ENCODE measurements at regions of chr9 and their contacts with region 1.

Region 1: GRCh38 chr9:72271613-72272478 is 93.2 kb downstream of the ZFAND5 start:
- DNase-seq: peak in 6 of 9 donors; percentile 23 to 38 (median 27)
- ATAC-seq: peak; percentile 65
- H3K4me3 ChIP-seq: no peak overlapping the region
- H3K4me3 Mint-ChIP-seq: no peak overlapping the region
- H3K27ac ChIP-seq: no peak overlapping the region
- H3K27ac Mint-ChIP-seq: no peak overlapping the region
- H3K4me1 ChIP-seq: no peaks in the 10 kb centered on the region
- H3K4me1 Mint-ChIP-seq: peaks cover 0 to 5% (median 0%) of the 10 kb centered on the region in 7 donors
- H3K27me3 ChIP-seq: no peaks in the 10 kb centered on the region
- H3K27me3 Mint-ChIP-seq: peaks cover 0 to 20% (median 2%) of the 10 kb centered on the region in 5 donors

Region 2: DNA sequence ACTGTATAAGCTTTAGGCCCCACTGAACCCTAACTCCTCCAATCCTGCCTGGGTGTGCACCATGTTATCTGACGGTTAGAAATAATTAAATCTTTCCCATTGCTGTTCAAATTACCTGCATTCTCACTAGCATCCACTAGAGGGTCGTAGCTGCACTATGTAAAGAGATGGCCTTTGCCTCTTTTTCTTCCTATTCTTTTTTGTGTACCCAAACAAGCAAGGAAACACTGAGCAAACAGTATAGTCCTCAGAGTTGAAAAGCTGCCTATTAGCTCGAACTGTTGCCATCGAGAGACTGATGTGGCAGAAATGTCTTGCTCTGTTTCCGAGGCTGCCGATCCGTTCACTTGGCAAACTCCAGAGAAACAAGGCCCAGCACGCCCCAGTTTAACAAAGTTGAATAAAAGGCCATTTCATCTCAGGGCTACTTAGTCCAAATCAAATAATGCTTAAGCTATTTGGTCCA is 986.6 kb before region 1 on chr9:
- CTCF ChIA-PET with region 1: no interaction called
- POLR2A ChIA-PET with region 1: no interaction called
- intact Hi-C with region 1: loop called (anchors 1 to 2 kb)
- DNase-seq: peak in 6 of 9 donors; percentile 10 to 42 (median 36)
- ATAC-seq: peak; percentile 79
- H3K4me3 ChIP-seq: no peak overlapping the region
- H3K4me3 Mint-ChIP-seq: no peak overlapping the region
- H3K27ac ChIP-seq: no peak overlapping the region
- H3K27ac Mint-ChIP-seq: no peak overlapping the region
- H3K4me1 ChIP-seq: no peaks in the 10 kb centered on the region
- H3K4me1 Mint-ChIP-seq: peaks cover 0 to 3% (median 0%) of the 10 kb centered on the region in 7 donors
- H3K27me3 ChIP-seq: no peaks in the 10 kb centered on the region
- H3K27me3 Mint-ChIP-seq: peaks cover 2 to 9% (median 6%) of the 10 kb centered on the region in 5 donors

Region 3: DNA sequence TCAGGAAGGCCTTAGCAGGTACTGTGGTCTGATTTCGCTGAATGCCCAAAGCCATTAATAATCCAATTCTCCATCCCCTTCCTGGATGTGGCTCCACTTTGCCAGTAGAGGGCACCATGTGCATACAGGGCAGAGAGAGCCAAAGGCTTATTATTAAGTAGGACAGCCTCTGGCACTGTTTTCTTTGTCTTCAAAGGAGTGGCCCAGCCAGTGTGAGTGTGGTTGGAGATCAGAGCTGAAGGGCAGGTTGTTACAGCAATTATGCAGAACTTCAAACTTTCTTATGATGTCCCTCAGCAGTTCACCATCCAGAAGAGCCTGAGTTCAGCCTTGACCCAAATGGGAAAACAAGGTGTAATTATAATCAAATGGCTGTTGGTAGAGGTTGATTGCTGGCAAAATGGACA is 464.9 kb before region 1 on chr9:
- CTCF ChIA-PET with region 1: interaction called, 3 read pairs
- POLR2A ChIA-PET with region 1: no interaction called
- intact Hi-C with region 1: loop called (anchors 2 kb)
- DNase-seq: peak in 8 of 9 donors; percentile 20 to 65 (median 50)
- ATAC-seq: peak; percentile 98
- H3K4me3 ChIP-seq: no peak overlapping the region
- H3K4me3 Mint-ChIP-seq: no peak overlapping the region
- H3K27ac ChIP-seq: no peak overlapping the region
- H3K27ac Mint-ChIP-seq: peak overlapping the region in 7 of 9 donors; percentile 19 to 85 (median 65)
- H3K4me1 ChIP-seq: peaks cover 0 to 7% of the 10 kb centered on the region in 2 donors
- H3K4me1 Mint-ChIP-seq: peaks cover 0 to 21% (median 10%) of the 10 kb centered on the region in 7 donors
- H3K27me3 ChIP-seq: no peaks in the 10 kb centered on the region
- H3K27me3 Mint-ChIP-seq: peaks cover 0 to 3% (median 0%) of the 10 kb centered on the region in 5 donors

Region 4: DNA sequence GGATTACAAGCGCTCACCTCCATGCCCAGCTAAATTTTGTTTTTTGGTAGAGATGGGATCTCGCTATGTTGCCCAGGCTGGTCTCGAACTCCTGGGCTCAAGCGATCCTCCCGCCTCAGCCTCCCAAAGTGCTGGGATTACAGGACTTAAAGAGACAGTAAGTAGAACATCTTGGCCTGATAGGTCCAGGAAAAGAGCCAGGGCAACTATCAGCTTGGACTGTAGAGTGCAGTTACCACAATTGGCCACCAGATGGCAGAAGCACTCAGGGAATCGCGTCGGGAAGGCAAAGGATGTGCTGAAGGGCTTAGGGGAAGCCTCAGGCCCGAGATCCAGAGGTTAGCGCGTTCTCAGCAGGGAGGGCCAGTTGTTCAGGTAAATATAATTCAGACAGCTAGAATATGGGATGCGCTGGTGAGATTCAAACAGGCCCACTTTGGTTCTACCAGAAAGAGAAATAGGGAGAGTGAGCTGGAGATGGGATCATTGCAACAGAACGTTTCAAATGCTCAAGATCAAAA is 232.9 kb before region 1 on chr9:
- CTCF ChIA-PET with region 1: interaction called, 5 read pairs
- POLR2A ChIA-PET with region 1: no interaction called
- intact Hi-C with region 1: loop called (anchors 1 kb)
- DNase-seq: peak; percentile 15 to 59 (median 41)
- ATAC-seq: peak; percentile 76
- H3K4me3 ChIP-seq: no peak overlapping the region
- H3K4me3 Mint-ChIP-seq: peak overlapping the region in 1 of 10 donors; percentile 66
- H3K27ac ChIP-seq: no peak overlapping the region
- H3K27ac Mint-ChIP-seq: no peak overlapping the region
- H3K4me1 ChIP-seq: peaks cover 0 to 3% of the 10 kb centered on the region in 2 donors
- H3K4me1 Mint-ChIP-seq: peaks cover 0 to 7% (median 4%) of the 10 kb centered on the region in 7 donors
- H3K27me3 ChIP-seq: no peaks in the 10 kb centered on the region
- H3K27me3 Mint-ChIP-seq: peaks cover 4 to 22% (median 6%) of the 10 kb centered on the region in 5 donors

Region 5: DNA sequence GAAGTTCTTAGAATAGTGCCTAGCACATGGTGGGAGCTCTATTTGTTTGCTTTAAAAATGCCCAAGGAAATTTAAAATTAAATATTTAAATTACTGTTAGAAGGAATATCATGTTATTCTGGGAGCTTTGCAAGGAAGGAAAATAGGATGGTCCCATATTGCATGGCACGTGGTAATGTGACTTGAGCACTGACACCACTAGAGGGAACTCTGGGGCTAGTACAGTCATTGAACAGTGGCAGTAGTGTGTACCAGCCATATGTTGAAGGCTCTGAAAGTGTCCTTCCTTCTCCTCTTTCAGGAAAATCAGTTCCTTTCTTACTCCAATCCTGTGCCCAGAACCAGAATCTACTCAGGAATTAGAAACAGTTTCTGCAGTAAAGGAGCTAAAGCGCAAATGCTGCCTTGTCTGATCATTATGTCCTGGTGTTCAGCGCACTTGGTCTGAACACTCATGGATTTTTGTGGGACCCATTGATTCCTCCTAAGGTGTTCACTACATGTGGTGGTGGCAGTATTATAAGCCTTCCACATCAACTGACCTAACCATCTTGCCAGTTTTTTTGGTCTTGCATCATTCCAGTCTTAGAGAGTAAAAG is 68.5 kb before region 1 on chr9:
- CTCF ChIA-PET with region 1: no interaction called
- POLR2A ChIA-PET with region 1: no interaction called
- intact Hi-C with region 1: loop called (anchors 2 kb)
- DNase-seq: no peak
- ATAC-seq: no peak
- H3K4me3 ChIP-seq: no peak overlapping the region
- H3K4me3 Mint-ChIP-seq: no peak overlapping the region
- H3K27ac ChIP-seq: no peak overlapping the region
- H3K27ac Mint-ChIP-seq: no peak overlapping the region
- H3K4me1 ChIP-seq: no peaks in the 10 kb centered on the region
- H3K4me1 Mint-ChIP-seq: peaks cover 0 to 3% (median 0%) of the 10 kb centered on the region in 7 donors
- H3K27me3 ChIP-seq: no peaks in the 10 kb centered on the region
- H3K27me3 Mint-ChIP-seq: peaks cover 6 to 13% (median 8%) of the 10 kb centered on the region in 5 donors

Region 6: GRCh38 chr9:72333709-72334108 is 61.9 kb after region 1 on chr9:
- CTCF ChIA-PET with region 1: no interaction called
- POLR2A ChIA-PET with region 1: no interaction called
- intact Hi-C with region 1: no loop called
- DNase-seq: no peak
- ATAC-seq: no peak
- H3K4me3 ChIP-seq: no peak overlapping the region
- H3K4me3 Mint-ChIP-seq: no peak overlapping the region
- H3K27ac ChIP-seq: no peak overlapping the region
- H3K27ac Mint-ChIP-seq: no peak overlapping the region
- H3K4me1 ChIP-seq: no peaks in the 10 kb centered on the region
- H3K4me1 Mint-ChIP-seq: peaks cover 0 to 2% (median 0%) of the 10 kb centered on the region in 7 donors
- H3K27me3 ChIP-seq: no peaks in the 10 kb centered on the region
- H3K27me3 Mint-ChIP-seq: peaks cover 0 to 24% (median 0%) of the 10 kb centered on the region in 5 donors

Measured in naive thymus-derived CD4-positive, alpha-beta T cell (primary cell).